ENCODE measurements at regions of chr14 and their contacts with region 1.

Region 1: GRCh38 chr14:52299692-52300278 is 14.3 kb upstream of the PTGER2 start:
- DNase-seq: peak in 2 of 5 donors; percentile 64 to 74
- H3K4me3 ChIP-seq: no peak overlapping the region
- H3K27ac ChIP-seq: no peak overlapping the region
- H3K4me1 ChIP-seq: no peaks in the 10 kb centered on the region
- H3K27me3 ChIP-seq: no peaks in the 10 kb centered on the region
- CTCF ChIP-seq: peak; percentile 65

Region 2: DNA sequence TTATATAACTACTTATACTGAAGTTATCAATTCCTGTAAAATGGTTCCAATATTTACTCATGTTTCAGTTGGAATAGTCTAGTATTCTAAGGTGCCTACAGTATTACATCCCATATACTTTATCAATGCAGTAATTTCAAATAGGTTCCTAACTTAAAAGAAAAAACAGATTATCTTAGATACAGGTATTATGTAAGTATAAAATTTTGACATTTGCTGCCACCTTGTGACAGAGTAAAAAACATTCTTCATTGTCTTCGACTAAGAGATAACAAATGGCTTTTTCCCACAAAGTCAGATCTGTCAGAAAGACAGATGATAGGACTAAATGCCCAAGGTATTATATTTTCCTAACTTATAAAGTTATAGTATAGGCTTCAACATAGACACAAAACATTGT is 173.8 kb after region 1 on chr14:
- intact Hi-C with region 1: loop called (anchors 5 kb)
- DNase-seq: peak in 2 of 5 donors; percentile 52 to 70
- H3K4me3 ChIP-seq: no peak overlapping the region
- H3K27ac ChIP-seq: no peak overlapping the region
- H3K4me1 ChIP-seq: no peaks in the 10 kb centered on the region
- H3K27me3 ChIP-seq: no peaks in the 10 kb centered on the region
- CTCF ChIP-seq: peak; percentile 41

Measured in kidney (tissue), 22 donors.